ENCODE measurements at regions of chr1 and their contacts with region 1.

Region 1: DNA sequence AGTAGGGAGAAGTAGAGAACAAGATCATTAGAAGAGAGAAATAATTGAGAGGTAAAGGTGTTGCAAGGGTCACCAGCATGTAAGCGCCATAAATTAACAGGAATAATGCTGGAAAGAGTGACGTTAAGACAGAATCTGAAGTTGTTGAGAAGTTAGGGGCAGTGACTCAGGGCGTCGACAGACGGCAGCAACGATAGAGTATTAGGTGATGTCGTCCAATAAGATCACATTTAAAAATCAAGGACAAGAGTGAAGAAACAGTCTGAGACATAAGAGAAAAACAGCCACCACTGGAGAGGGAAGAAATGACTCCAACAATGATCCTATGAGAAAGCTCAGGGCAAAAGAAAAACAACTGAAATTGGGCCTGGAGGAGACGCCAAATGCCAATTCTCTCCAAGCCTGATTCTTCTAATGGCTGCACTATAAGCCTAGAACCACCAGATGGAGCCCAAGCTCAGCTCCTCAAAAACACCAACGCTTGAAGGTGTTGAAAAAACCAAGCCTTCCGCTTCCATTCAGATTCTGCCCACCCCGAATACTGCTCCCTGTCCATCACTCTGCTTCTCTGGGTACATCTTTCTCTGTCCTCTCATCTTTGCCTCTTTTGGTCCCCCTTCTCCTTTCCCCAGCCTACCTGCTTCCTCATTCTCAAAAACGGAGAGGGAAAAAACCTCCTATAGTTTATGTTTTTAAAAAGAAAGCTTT is 70.0 kb downstream of the LUZP1 start:
- DNase-seq: peak in 3 of 5 donors; percentile 37 to 58 (median 55)
- ATAC-seq: peak; percentile 16 to 72 (median 66)
- H3K4me3 ChIP-seq: no peak overlapping the region
- H3K27ac ChIP-seq: no peak overlapping the region
- H3K4me1 ChIP-seq: peaks cover 17 to 56% (median 47%) of the 10 kb centered on the region in 12 donors
- H3K27me3 ChIP-seq: no peaks in the 10 kb centered on the region
- CTCF ChIP-seq: peak; percentile 87 to 98 (median 92)
- POLR2A ChIP-seq: no peak

Region 2: GRCh38 chr1:22930235-22930912 is 168.2 kb before region 1 on chr1:
- intact Hi-C with region 1: no loop called
- DNase-seq: peak; percentile 28 to 70 (median 39)
- ATAC-seq: peak; percentile 51 to 85 (median 79)
- H3K4me3 ChIP-seq: no peak overlapping the region
- H3K27ac ChIP-seq: no peak overlapping the region
- H3K4me1 ChIP-seq: no peaks in the 10 kb centered on the region
- H3K27me3 ChIP-seq: peaks cover 0 to 19% (median 0%) of the 10 kb centered on the region in 9 donors
- CTCF ChIP-seq: peak; percentile 34 to 71 (median 64)
- POLR2A ChIP-seq: no peak

Region 3: GRCh38 chr1:22976461-22977243 is 122.0 kb before region 1 on chr1:
- intact Hi-C with region 1: loop called in 2 of 10 experiments (anchors 5 kb)
- DNase-seq: peak in 4 of 5 donors; percentile 35 to 55 (median 47)
- ATAC-seq: peak; percentile 79 to 96 (median 94)
- H3K4me3 ChIP-seq: no peak overlapping the region
- H3K27ac ChIP-seq: no peak overlapping the region
- H3K4me1 ChIP-seq: no peaks in the 10 kb centered on the region
- H3K27me3 ChIP-seq: peaks cover 0 to 16% (median 6%) of the 10 kb centered on the region in 9 donors
- CTCF ChIP-seq: peak; percentile 37 to 68 (median 64)
- POLR2A ChIP-seq: no peak

Region 4: DNA sequence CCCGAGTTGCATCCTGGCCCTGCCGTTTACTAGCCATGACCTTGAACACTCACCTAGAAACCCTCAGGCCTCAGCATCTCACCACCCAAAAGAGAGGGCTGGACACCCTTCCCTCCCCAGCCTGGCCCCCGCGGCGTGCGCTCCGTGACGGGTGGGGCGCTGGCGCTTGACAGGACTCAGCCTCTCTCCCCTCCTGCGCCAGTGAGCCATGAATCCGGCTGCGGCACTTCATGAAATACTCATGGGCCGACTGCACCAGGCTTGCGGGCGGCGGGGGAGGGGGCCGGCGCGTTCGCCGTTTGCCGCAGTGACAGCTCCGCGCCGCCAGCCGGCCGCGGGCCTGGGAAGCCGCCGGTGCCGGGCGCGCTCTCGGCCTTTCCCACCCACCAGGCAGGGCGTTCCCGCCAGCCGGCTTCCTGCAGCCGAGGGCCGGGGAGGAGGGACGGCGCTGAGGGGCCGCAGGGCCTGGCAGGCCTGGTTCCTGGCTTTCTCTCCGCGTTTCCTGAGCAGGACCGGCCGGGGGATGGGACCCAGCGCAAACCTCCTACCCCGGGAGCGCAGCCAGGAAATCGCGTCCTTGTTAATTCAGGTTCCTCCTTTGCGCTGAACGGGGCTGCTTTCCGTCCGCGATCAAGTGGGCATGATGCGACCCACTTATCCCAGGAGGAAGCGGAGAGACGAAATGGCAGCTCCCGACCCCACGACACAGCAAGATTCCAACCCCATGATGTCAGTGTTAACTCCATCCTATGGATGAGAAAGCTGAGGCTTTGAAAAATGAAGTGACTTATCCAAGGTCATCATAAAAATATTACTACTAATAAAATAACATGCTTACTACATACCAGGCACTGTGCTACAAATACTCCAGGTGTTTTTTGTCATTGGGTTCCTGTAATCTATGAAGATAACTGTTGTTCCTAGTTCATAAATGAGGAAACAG is 79.1 kb after region 1 on chr1:
- intact Hi-C with region 1: loop called in 2 of 10 experiments (anchors 2 kb)
- DNase-seq: peak; percentile 91 to 93 (median 91)
- ATAC-seq: peak; percentile 87 to 98 (median 94)
- H3K4me3 ChIP-seq: peak overlapping the region; percentile 25 to 72 (median 63)
- H3K27ac ChIP-seq: peak overlapping the region; percentile 74 to 98 (median 92)
- H3K4me1 ChIP-seq: peaks cover 0 to 30% (median 20%) of the 10 kb centered on the region in 12 donors
- H3K27me3 ChIP-seq: no peaks in the 10 kb centered on the region
- CTCF ChIP-seq: peak in 6 of 12 donors; percentile 19 to 48 (median 35)
- POLR2A ChIP-seq: peak in 1 of 2 donors; percentile 55

Region 5: GRCh38 chr1:23263380-23263887 is 164.8 kb after region 1 on chr1:
- intact Hi-C with region 1: loop called in 1 of 10 experiments (anchors 10 kb)
- DNase-seq: no peak
- ATAC-seq: no peak
- H3K4me3 ChIP-seq: no peak overlapping the region
- H3K27ac ChIP-seq: no peak overlapping the region
- H3K4me1 ChIP-seq: no peaks in the 10 kb centered on the region
- H3K27me3 ChIP-seq: no peaks in the 10 kb centered on the region
- CTCF ChIP-seq: no peak
- POLR2A ChIP-seq: no peak

Region 6: GRCh38 chr1:23282957-23283356 is 184.3 kb after region 1 on chr1:
- intact Hi-C with region 1: loop called in 6 of 10 experiments (anchors 5 to 10 kb)
- DNase-seq: no peak
- ATAC-seq: no peak
- H3K4me3 ChIP-seq: no peak overlapping the region
- H3K27ac ChIP-seq: no peak overlapping the region
- H3K4me1 ChIP-seq: peaks cover 0 to 9% (median 0%) of the 10 kb centered on the region in 12 donors
- H3K27me3 ChIP-seq: no peaks in the 10 kb centered on the region
- CTCF ChIP-seq: no peak
- POLR2A ChIP-seq: no peak